ENCODE measurements at regions of chr1 and their contacts with region 1.

Region 1: DNA sequence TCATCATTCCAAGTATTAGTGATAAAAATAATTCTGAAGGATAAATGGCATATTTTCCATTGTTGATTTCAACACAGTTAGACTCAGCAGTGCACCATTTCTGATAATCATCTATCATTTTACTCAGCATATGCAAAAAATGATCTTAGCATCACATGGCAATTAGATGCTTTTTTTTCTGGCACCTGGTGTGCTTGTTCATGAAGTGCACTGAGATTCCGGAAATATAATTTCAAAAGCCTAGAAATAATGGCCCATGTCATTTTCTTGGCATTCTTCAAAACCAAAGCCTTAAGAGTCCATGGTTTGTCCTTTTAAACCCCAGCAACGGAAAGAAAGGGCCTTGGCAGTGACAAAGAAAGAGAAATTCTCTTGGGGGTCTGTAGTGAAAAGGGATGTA is 278.8 kb downstream of the KIF26B start:
- DNase-seq: no peak
- ATAC-seq: no peak
- H3K4me3 ChIP-seq: no peak overlapping the region
- H3K27ac ChIP-seq: no peak overlapping the region
- H3K4me1 ChIP-seq: no peaks in the 10 kb centered on the region; the same call in 1 of the 2 replicates
- H3K27me3 ChIP-seq: no peaks in the 10 kb centered on the region; the same call in 1 of the 2 replicates
- CTCF ChIP-seq: no peak
- POLR2A ChIP-seq: no peak
- RAD21 ChIP-seq: no peak

Region 2: GRCh38 chr1:245448975-245449431 is 15.4 kb after region 1 on chr1:
- CTCF ChIA-PET with region 1: no interaction called
- POLR2A ChIA-PET with region 1: no interaction called
- dilution Hi-C with region 1: no loop called
- in situ Hi-C with region 1: no loop called
- intact Hi-C with region 1: loop called (anchors 1 kb)
- DNase-seq: peak; percentile 64
- ATAC-seq: peak; percentile 88
- H3K4me3 ChIP-seq: peak overlapping the region; percentile 16
- H3K27ac ChIP-seq: peak overlapping the region; percentile 66; the same call in 1 of the 2 replicates
- H3K4me1 ChIP-seq: peaks cover 4% of the 10 kb centered on the region
- H3K27me3 ChIP-seq: no peaks in the 10 kb centered on the region
- CTCF ChIP-seq: no peak
- POLR2A ChIP-seq: no peak
- RAD21 ChIP-seq: no peak

Region 3: GRCh38 chr1:246043367-246043955 is 609.9 kb after region 1 on chr1:
- CTCF ChIA-PET with region 1: no interaction called
- POLR2A ChIA-PET with region 1: no interaction called
- dilution Hi-C with region 1: no loop called
- in situ Hi-C with region 1: no loop called
- intact Hi-C with region 1: no loop called
- DNase-seq: no peak
- ATAC-seq: no peak
- H3K4me3 ChIP-seq: no peak overlapping the region
- H3K27ac ChIP-seq: no peak overlapping the region
- H3K4me1 ChIP-seq: no peaks in the 10 kb centered on the region
- H3K27me3 ChIP-seq: no peaks in the 10 kb centered on the region
- CTCF ChIP-seq: no peak
- POLR2A ChIP-seq: no peak
- RAD21 ChIP-seq: no peak